ENCODE measurements at regions of chr7 and their contacts with region 1.

Region 1: DNA sequence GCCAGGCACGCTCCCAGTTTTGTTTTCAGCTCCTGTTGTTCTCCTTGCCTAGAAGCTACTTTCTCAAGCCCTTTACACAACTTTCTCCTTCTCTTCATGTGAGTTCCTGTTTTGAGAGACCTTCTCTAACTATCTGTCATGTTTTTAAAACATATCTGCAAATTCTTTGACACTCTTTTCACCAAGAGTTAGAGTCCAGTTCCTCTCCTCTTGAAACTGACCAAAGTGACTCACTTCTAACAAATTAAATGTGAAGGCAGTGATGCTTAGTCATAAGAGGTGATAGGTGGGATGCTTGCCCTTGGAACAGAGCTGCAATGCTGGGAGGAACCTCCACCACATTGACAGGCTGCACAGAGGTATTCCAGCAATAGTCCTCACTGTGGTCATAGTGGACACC is 25.3 kb downstream of the ZSCAN25 start:
- DNase-seq: no peak
- H3K4me3 Mint-ChIP-seq: no peak overlapping the region
- H3K27ac Mint-ChIP-seq: peak overlapping the region; percentile 58
- H3K4me1 Mint-ChIP-seq: peaks cover 34% of the 10 kb centered on the region
- H3K27me3 Mint-ChIP-seq: no peaks in the 10 kb centered on the region

Region 2: DNA sequence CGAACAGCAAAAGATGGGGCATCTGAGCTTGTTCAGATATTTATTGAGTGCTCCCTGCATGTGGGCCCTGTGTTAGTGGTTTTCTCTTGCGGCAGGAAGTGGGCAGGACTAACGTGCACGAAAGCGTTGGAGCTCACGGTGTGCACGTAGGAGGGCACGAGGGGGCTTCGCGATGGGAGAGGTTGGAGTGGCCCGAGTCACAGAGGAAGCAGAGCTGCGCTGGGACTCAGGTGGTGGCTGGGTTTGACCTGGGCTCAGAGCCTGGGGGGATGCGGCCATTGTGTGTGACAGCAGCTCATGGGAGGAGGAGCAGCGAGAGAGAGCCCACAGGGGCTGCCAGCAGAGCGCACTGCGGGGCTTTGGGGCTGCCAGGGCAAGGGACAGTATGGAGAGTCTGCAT is 17.5 kb before region 1 on chr7:
- intact Hi-C with region 1: loop called (anchors 1 kb)
- DNase-seq: peak; percentile 72
- H3K4me3 Mint-ChIP-seq: peak overlapping the region; percentile 91
- H3K27ac Mint-ChIP-seq: peak overlapping the region; percentile 97
- H3K4me1 Mint-ChIP-seq: peaks cover 64% of the 10 kb centered on the region
- H3K27me3 Mint-ChIP-seq: no peaks in the 10 kb centered on the region